Natural killer cell (primary cell): ENCODE measurements at regions of chr15 and their contacts with region 1.

Region 1: GRCh38 chr15:38354315-38354929 is 99.5 kb upstream of the FAM98B start:
- DNase-seq: peak; percentile 33 to 76
- ATAC-seq: peak in 1 of 3 donors; percentile 50
- H3K4me3 ChIP-seq: no peak overlapping the region
- H3K4me3 Mint-ChIP-seq: no peak overlapping the region
- H3K27ac ChIP-seq: no peak overlapping the region
- H3K27ac Mint-ChIP-seq: no peak overlapping the region
- H3K4me1 ChIP-seq: no peaks in the 10 kb centered on the region
- H3K4me1 Mint-ChIP-seq: no peaks in the 10 kb centered on the region
- H3K27me3 ChIP-seq: no peaks in the 10 kb centered on the region
- H3K27me3 Mint-ChIP-seq: no peaks in the 10 kb centered on the region
- CTCF ChIP-seq: peak; percentile 75

Region 2: GRCh38 chr15:37764733-37765191 is 589.7 kb before region 1 on chr15:
- intact Hi-C with region 1: loop called (anchors 2 kb)
- DNase-seq: peak in 1 of 2 donors; percentile 43
- ATAC-seq: peak in 1 of 3 donors; percentile 63
- H3K4me3 ChIP-seq: no peak overlapping the region
- H3K4me3 Mint-ChIP-seq: no peak overlapping the region
- H3K27ac ChIP-seq: no peak overlapping the region
- H3K27ac Mint-ChIP-seq: no peak overlapping the region
- H3K4me1 ChIP-seq: peaks cover 3% of the 10 kb centered on the region
- H3K4me1 Mint-ChIP-seq: peaks cover 18 to 25% of the 10 kb centered on the region in 2 donors
- H3K27me3 ChIP-seq: no peaks in the 10 kb centered on the region
- H3K27me3 Mint-ChIP-seq: peaks cover 0 to 3% of the 10 kb centered on the region in 2 donors
- CTCF ChIP-seq: peak; percentile 53

Region 3: DNA sequence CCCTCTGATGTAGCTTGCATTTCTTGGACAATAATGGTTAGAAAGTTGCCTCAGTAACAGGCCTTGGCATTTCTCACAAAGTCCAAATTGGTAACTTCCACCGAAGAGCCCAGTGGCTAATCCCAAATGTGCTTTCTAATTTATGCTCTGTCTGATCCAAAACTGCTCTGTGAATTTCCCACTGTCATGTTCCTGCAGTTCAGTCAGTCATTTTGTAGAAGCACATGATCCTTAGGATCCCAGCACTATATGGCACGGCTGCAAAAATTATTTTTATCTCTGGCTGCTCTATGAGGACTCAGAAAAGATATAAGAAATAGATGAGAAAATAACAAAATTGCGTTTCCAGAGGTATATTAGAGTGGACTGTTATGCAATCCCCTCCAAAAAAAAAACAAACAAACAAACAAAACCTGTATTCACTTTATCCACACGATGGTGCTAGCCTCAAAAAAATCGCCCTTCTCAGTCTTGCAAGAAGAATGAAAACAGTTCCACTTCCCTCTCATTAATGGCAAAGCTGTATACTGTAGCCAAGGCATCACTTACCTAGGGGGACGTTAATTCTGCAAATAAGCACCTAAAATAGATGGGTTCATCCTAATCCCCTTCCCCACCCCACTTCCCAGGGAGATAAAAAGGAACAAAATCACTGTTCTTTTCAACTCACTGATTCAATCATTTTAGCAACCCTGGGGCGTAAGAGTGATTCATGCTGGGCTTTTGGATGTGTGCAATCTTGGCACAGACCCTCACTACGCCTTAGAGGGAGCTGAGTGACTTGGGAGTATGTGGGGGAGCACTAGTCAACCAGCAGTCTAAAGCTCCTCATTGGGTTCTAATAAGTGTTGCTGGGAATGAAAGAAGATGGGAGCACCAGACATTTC is 358.7 kb before region 1 on chr15:
- intact Hi-C with region 1: loop called (anchors 1 kb)
- DNase-seq: peak in 1 of 2 donors; percentile 32
- ATAC-seq: peak in 1 of 3 donors; percentile 32
- H3K4me3 ChIP-seq: no peak overlapping the region
- H3K4me3 Mint-ChIP-seq: no peak overlapping the region
- H3K27ac ChIP-seq: no peak overlapping the region
- H3K27ac Mint-ChIP-seq: no peak overlapping the region
- H3K4me1 ChIP-seq: no peaks in the 10 kb centered on the region
- H3K4me1 Mint-ChIP-seq: no peaks in the 10 kb centered on the region
- H3K27me3 ChIP-seq: no peaks in the 10 kb centered on the region
- H3K27me3 Mint-ChIP-seq: peaks cover 21 to 31% of the 10 kb centered on the region in 2 donors
- CTCF ChIP-seq: peak; percentile 42

Region 4: GRCh38 chr15:38002883-38003477 is 351.4 kb before region 1 on chr15:
- intact Hi-C with region 1: loop called (anchors 2 kb)
- DNase-seq: peak in 1 of 2 donors; percentile 28
- ATAC-seq: peak in 1 of 3 donors; percentile 58
- H3K4me3 ChIP-seq: no peak overlapping the region
- H3K4me3 Mint-ChIP-seq: no peak overlapping the region
- H3K27ac ChIP-seq: no peak overlapping the region
- H3K27ac Mint-ChIP-seq: no peak overlapping the region
- H3K4me1 ChIP-seq: no peaks in the 10 kb centered on the region
- H3K4me1 Mint-ChIP-seq: no peaks in the 10 kb centered on the region
- H3K27me3 ChIP-seq: no peaks in the 10 kb centered on the region
- H3K27me3 Mint-ChIP-seq: peaks cover 10 to 19% of the 10 kb centered on the region in 2 donors
- CTCF ChIP-seq: peak; percentile 30